Mammary epithelial cell (primary cell): ENCODE measurements at regions of chr5 and their contacts with region 1.

Region 1: GRCh38 chr5:79301046-79301712 is 65.2 kb downstream of the JMY start:
- DNase-seq: no peak
- H3K4me3 ChIP-seq: no peak overlapping the region
- H3K27ac ChIP-seq: no peak overlapping the region
- H3K4me1 ChIP-seq: peaks cover 15% of the 10 kb centered on the region
- H3K27me3 ChIP-seq: no peaks in the 10 kb centered on the region
- CTCF ChIP-seq: no peak

Region 2: GRCh38 chr5:79318935-79319614 is 17.9 kb after region 1 on chr5:
- CTCF ChIA-PET with region 1: interaction called, 14 read pairs
- dilution Hi-C with region 1: no loop called
- in situ Hi-C with region 1: no loop called
- intact Hi-C with region 1: no loop called
- DNase-seq: peak; percentile 83
- H3K4me3 ChIP-seq: no peak overlapping the region
- H3K27ac ChIP-seq: peak overlapping the region; percentile 60
- H3K4me1 ChIP-seq: peaks cover 10% of the 10 kb centered on the region
- H3K27me3 ChIP-seq: no peaks in the 10 kb centered on the region
- CTCF ChIP-seq: no peak